ENCODE measurements at regions of chrX and their contacts with region 1.

Region 1: DNA sequence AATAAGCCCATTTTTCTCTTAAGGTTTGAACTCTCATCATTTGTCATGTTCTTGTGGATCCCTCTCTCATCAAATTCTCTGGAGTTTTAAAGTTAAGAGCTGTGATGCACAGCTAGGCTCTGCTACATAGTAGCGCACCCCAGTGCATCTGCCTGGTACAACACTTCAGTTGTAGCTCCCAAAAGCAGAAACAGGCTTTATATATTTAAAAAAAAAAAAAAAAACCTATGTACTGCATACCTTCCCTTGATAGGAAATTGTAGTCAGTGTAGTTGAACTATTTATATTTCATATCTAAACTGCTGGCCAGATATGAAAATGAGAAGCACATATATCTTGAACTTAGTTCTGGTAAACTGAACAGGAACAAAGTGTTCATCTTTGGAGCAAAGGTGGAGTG is 131.4 kb downstream of the KLHL13 start:
- DNase-seq: no peak
- H3K4me3 ChIP-seq: no peak overlapping the region
- H3K27ac ChIP-seq: no peak overlapping the region
- H3K4me1 ChIP-seq: no peaks in the 10 kb centered on the region
- H3K27me3 ChIP-seq: no peaks in the 10 kb centered on the region
- CTCF ChIP-seq: no peak
- POLR2A ChIP-seq: no peak

Region 2: DNA sequence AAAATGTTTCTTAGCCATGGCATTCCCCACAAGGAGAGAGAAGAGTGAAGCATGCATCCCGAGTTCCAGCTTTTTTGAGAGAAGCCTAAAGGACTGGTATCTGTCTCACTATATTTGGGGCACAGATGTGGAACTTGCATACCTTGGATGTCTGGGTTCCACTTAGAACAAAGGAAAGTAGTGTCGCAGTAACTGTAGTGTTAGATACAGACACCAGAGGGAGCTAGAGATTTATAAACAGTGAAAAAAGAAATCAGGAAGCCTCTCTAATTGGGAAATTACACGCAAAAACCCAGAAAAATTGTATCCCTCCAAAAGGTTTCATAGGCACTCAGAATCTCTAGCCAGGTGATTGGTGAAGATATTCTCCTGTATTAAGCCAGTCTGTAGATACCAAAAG is 1780.3 kb before region 1 on chrX:
- CTCF ChIA-PET with region 1: interaction called, 3 read pairs
- POLR2A ChIA-PET with region 1: no interaction called
- dilution Hi-C with region 1: no loop called
- intact Hi-C with region 1: loop called (anchors 5 kb)
- DNase-seq: peak; percentile 1
- H3K4me3 ChIP-seq: no peak overlapping the region
- H3K27ac ChIP-seq: no peak overlapping the region
- H3K4me1 ChIP-seq: no peaks in the 10 kb centered on the region
- H3K27me3 ChIP-seq: no peaks in the 10 kb centered on the region
- CTCF ChIP-seq: peak in 1 of 2 donors; percentile 13
- POLR2A ChIP-seq: no peak

Region 3: DNA sequence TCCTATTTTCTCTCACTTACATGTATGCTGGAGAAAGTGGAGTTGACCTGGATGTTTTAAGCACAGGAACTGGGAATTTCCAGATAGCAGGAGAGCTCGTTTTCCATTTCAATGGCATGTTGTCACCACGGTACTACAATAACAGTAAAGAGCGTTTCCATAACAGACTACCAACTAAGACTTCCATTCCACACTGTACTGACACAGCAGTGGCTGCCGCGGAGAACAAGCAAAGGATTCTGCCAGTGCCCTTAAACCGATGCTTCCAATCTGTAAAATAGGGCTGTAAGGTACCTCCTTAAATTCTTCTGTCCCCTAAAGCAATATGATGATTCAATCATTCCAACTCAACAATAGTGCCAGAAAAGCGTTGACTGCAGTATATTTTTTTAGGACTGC is 12.5 kb before region 1 on chrX:
- CTCF ChIA-PET with region 1: interaction called, 12 read pairs
- POLR2A ChIA-PET with region 1: no interaction called
- dilution Hi-C with region 1: no loop called
- intact Hi-C with region 1: no loop called
- DNase-seq: peak; percentile 62
- H3K4me3 ChIP-seq: no peak overlapping the region
- H3K27ac ChIP-seq: no peak overlapping the region
- H3K4me1 ChIP-seq: no peaks in the 10 kb centered on the region
- H3K27me3 ChIP-seq: no peaks in the 10 kb centered on the region
- CTCF ChIP-seq: no peak
- POLR2A ChIP-seq: no peak

Measured in endothelial cell of umbilical vein (primary cell).